ENCODE measurements at regions of chr3 and their contacts with region 1.

Region 1: DNA sequence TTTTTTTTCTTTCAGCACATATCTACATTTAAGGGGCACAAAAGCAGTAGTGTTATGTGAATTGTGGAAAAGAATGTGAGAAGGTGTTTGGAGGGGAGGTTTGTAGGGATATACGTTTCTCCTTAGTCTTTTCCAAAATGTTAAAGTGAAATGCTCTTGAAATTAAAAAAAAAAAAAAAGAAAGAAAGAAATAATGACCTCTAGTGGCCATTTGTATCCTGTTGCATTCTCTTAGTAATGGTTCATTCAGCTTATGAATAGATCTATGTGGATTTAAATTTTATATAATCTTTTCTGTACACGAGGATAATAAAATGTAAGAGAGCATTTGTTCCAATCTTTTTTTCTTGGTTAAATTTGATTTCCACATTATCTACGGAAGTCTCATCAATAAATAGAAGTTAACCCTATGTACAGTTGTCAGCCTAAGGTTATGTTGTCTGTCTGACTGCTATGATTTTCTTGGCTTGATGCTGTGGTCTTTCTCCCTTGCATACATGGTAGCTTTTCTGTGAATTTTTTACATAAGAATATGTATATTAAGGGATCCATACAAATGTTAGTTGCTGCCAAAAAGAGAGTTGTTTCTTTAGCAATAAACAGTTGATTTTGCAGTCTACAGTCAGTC is 1.7 kb downstream of the P2RY13 start:
- DNase-seq: no peak
- ATAC-seq: no peak
- H3K4me3 Mint-ChIP-seq: no peak overlapping the region
- H3K27ac Mint-ChIP-seq: no peak overlapping the region
- H3K4me1 Mint-ChIP-seq: peaks cover 6% of the 10 kb centered on the region
- H3K27me3 Mint-ChIP-seq: peaks cover 6% of the 10 kb centered on the region
- CTCF ChIP-seq: peak; percentile 49

Region 2: GRCh38 chr3:151290673-151291072 is 37.0 kb before region 1 on chr3:
- CTCF ChIA-PET with region 1: interaction called, 17 read pairs
- POLR2A ChIA-PET with region 1: no interaction called
- intact Hi-C with region 1: loop called (anchors 5 kb)
- DNase-seq: no peak
- ATAC-seq: no peak
- H3K4me3 Mint-ChIP-seq: no peak overlapping the region
- H3K27ac Mint-ChIP-seq: no peak overlapping the region
- H3K4me1 Mint-ChIP-seq: peaks cover 2% of the 10 kb centered on the region
- H3K27me3 Mint-ChIP-seq: peaks cover 7% of the 10 kb centered on the region
- CTCF ChIP-seq: peak; percentile 65

Region 3: GRCh38 chr3:151299006-151299405 is 28.7 kb before region 1 on chr3:
- CTCF ChIA-PET with region 1: interaction called, 45 read pairs
- POLR2A ChIA-PET with region 1: no interaction called
- intact Hi-C with region 1: loop called (anchors 5 kb)
- DNase-seq: no peak
- ATAC-seq: no peak
- H3K4me3 Mint-ChIP-seq: no peak overlapping the region
- H3K27ac Mint-ChIP-seq: no peak overlapping the region
- H3K4me1 Mint-ChIP-seq: peaks cover 21% of the 10 kb centered on the region
- H3K27me3 Mint-ChIP-seq: peaks cover 14% of the 10 kb centered on the region
- CTCF ChIP-seq: no peak

Region 4: GRCh38 chr3:151305101-151305750 is 22.5 kb before region 1 on chr3:
- CTCF ChIA-PET with region 1: interaction called, 45 read pairs
- POLR2A ChIA-PET with region 1: interaction called, 3 read pairs
- intact Hi-C with region 1: no loop called
- DNase-seq: peak; percentile 46
- ATAC-seq: peak; percentile 86
- H3K4me3 Mint-ChIP-seq: no peak overlapping the region
- H3K27ac Mint-ChIP-seq: peak overlapping the region; percentile 72
- H3K4me1 Mint-ChIP-seq: peaks cover 62% of the 10 kb centered on the region
- H3K27me3 Mint-ChIP-seq: peaks cover 13% of the 10 kb centered on the region
- CTCF ChIP-seq: no peak